ENCODE measurements at regions of chr2 and their contacts with region 1.

Region 1: GRCh38 chr2:3959372-3959771 is 256.0 kb downstream of the DCDC2C start:
- DNase-seq: no peak
- H3K4me3 ChIP-seq: no peak overlapping the region
- H3K27ac ChIP-seq: no peak overlapping the region
- H3K4me1 ChIP-seq: no peaks in the 10 kb centered on the region
- H3K27me3 ChIP-seq: no peaks in the 10 kb centered on the region
- CTCF ChIP-seq: peak in 2 of 3 experiments; percentile 38 to 57

Region 2: GRCh38 chr2:3919622-3920021 is 39.8 kb before region 1 on chr2:
- intact Hi-C with region 1: no loop called
- DNase-seq: no peak
- H3K4me3 ChIP-seq: no peak overlapping the region
- H3K27ac ChIP-seq: no peak overlapping the region
- H3K4me1 ChIP-seq: no peaks in the 10 kb centered on the region
- H3K27me3 ChIP-seq: no peaks in the 10 kb centered on the region
- CTCF ChIP-seq: no peak

Region 3: DNA sequence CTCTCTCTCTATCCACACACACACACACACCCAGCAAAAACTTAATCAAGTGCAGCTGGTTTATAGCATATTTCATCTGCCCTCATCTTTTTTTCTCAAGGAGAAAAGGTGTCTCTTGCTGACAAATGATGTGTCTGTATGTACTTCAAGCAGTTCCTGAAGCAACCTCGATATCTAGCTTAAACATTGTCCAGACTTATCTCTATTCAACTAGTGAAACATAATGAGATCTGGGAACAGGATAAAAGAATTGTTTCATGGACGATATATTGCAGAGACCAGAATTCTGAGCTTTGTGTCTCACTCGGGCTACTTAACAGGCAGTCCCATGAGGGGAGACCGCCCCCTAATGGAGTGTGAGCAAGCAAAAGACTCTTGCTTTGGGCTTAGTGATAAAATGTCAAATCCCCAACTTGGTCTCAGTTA is 803.6 kb after region 1 on chr2:
- intact Hi-C with region 1: loop called (anchors 5 kb)
- DNase-seq: no peak
- H3K4me3 ChIP-seq: no peak overlapping the region
- H3K27ac ChIP-seq: no peak overlapping the region
- H3K4me1 ChIP-seq: no peaks in the 10 kb centered on the region
- H3K27me3 ChIP-seq: no peaks in the 10 kb centered on the region
- CTCF ChIP-seq: peak in 1 of 3 experiments; percentile 25

Measured in ascending aorta (tissue), 2 donors.